ENCODE measurements at regions of chr1 and their contacts with region 1.

Region 1: GRCh38 chr1:89198491-89199072 is at the start of gene GBP4:
- DNase-seq: peak; percentile 19 to 83 (median 53)
- ATAC-seq: peak; percentile 60
- H3K4me3 ChIP-seq: peak within 1 kb of the TSS; percentile 75
- H3K4me3 Mint-ChIP-seq: peak within 1 kb of the TSS; percentile 95
- H3K27ac ChIP-seq: peak within 1 kb of the TSS; percentile 64 to 84
- H3K27ac Mint-ChIP-seq: peak within 1 kb of the TSS; percentile 89
- H3K4me1 ChIP-seq: peaks cover 27% of the 10 kb centered on the region
- H3K4me1 Mint-ChIP-seq: peaks cover 85% of the 10 kb centered on the region
- H3K27me3 ChIP-seq: no peaks in the 10 kb centered on the region
- H3K27me3 Mint-ChIP-seq: no peaks in the 10 kb centered on the region
- CTCF ChIP-seq: no peak
- total RNA-seq, gene GBP4: 11.3 to 11.7 TPM

Region 2: DNA sequence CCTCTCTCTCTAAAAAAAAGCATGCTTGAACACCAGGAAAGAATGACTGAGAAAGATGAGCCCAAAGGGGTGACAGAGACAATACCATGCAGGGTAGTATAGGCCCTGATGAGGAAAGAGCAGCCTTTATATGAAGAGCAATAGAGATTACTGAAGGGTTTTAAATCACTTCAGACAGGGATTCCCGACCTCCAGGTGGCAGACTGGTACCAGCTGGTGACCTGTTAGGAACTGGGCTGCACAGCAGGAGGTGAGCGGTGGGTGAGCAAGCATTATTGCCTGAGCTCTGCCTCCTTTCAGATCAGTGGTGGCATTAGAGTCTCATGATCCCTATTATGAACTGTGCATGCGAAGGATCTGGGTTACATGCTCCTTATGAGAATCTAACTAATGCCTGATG is 276.4 kb before region 1 on chr1:
- CTCF ChIA-PET with region 1: no interaction called
- POLR2A ChIA-PET with region 1: no interaction called
- intact Hi-C with region 1: no loop called
- DNase-seq: no peak
- ATAC-seq: no peak
- H3K4me3 ChIP-seq: no peak overlapping the region
- H3K4me3 Mint-ChIP-seq: no peak overlapping the region
- H3K27ac ChIP-seq: no peak overlapping the region
- H3K27ac Mint-ChIP-seq: no peak overlapping the region
- H3K4me1 ChIP-seq: no peaks in the 10 kb centered on the region
- H3K4me1 Mint-ChIP-seq: no peaks in the 10 kb centered on the region
- H3K27me3 ChIP-seq: no peaks in the 10 kb centered on the region
- H3K27me3 Mint-ChIP-seq: no peaks in the 10 kb centered on the region
- CTCF ChIP-seq: no peak

Region 3: GRCh38 chr1:89065079-89065868 is 133.3 kb before region 1 on chr1 and contains the start of gene GBP1:
- CTCF ChIA-PET with region 1: no interaction called
- POLR2A ChIA-PET with region 1: interaction called, 10 read pairs
- intact Hi-C with region 1: no loop called
- DNase-seq: peak in 4 of 14 experiments; percentile 14 to 81 (median 71)
- ATAC-seq: peak; percentile 87
- H3K4me3 ChIP-seq: peak within 1 kb of the TSS; percentile 61
- H3K4me3 Mint-ChIP-seq: peak within 1 kb of the TSS; percentile 97
- H3K27ac ChIP-seq: peak within 1 kb of the TSS; percentile 69 to 70
- H3K27ac Mint-ChIP-seq: peak within 1 kb of the TSS; percentile 93
- H3K4me1 ChIP-seq: peaks cover 13% of the 10 kb centered on the region
- H3K4me1 Mint-ChIP-seq: peaks cover 74% of the 10 kb centered on the region
- H3K27me3 ChIP-seq: no peaks in the 10 kb centered on the region
- H3K27me3 Mint-ChIP-seq: no peaks in the 10 kb centered on the region
- CTCF ChIP-seq: no peak
- total RNA-seq, gene GBP1: 15.5 to 16.5 TPM

Region 4: DNA sequence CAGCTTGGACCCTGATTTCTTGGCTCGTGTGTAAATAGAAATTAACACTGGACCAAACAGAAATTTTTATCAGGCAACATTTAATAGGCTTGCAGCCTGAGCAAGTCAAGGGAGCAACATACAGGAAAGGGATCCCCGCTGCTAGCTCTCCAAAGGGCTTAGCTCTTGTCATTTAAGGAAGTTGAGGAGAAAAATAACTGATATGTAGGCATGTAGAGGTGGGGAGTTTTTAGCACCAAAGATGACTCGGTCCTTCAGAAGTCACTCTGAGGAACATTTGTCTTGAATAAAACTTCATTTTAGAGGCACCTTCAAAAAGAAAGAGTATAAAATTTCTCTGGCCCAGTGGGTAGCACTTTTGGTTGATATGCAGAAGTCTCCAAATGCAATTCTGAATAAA is 99.7 kb before region 1 on chr1:
- CTCF ChIA-PET with region 1: no interaction called
- POLR2A ChIA-PET with region 1: no interaction called
- intact Hi-C with region 1: no loop called
- DNase-seq: no peak
- ATAC-seq: no peak
- H3K4me3 ChIP-seq: no peak overlapping the region
- H3K4me3 Mint-ChIP-seq: no peak overlapping the region
- H3K27ac ChIP-seq: no peak overlapping the region
- H3K27ac Mint-ChIP-seq: no peak overlapping the region
- H3K4me1 ChIP-seq: no peaks in the 10 kb centered on the region
- H3K4me1 Mint-ChIP-seq: no peaks in the 10 kb centered on the region
- H3K27me3 ChIP-seq: no peaks in the 10 kb centered on the region
- H3K27me3 Mint-ChIP-seq: no peaks in the 10 kb centered on the region
- CTCF ChIP-seq: no peak

Region 5: GRCh38 chr1:89261926-89262515 is 63.4 kb after region 1 on chr1:
- CTCF ChIA-PET with region 1: interaction called, 3 read pairs
- POLR2A ChIA-PET with region 1: interaction called, 41 read pairs
- intact Hi-C with region 1: loop called in 1 of 2 experiments (anchors 5 kb)
- DNase-seq: no peak
- ATAC-seq: no peak
- H3K4me3 ChIP-seq: no peak overlapping the region
- H3K4me3 Mint-ChIP-seq: no peak overlapping the region
- H3K27ac ChIP-seq: no peak overlapping the region
- H3K27ac Mint-ChIP-seq: peak overlapping the region; percentile 15
- H3K4me1 ChIP-seq: peaks cover 35% of the 10 kb centered on the region
- H3K4me1 Mint-ChIP-seq: peaks cover 66% of the 10 kb centered on the region
- H3K27me3 ChIP-seq: no peaks in the 10 kb centered on the region
- H3K27me3 Mint-ChIP-seq: no peaks in the 10 kb centered on the region
- CTCF ChIP-seq: no peak

Region 6: GRCh38 chr1:89274411-89274857 is 75.9 kb after region 1 on chr1:
- CTCF ChIA-PET with region 1: interaction called, 10 read pairs
- POLR2A ChIA-PET with region 1: interaction called, 62 read pairs
- intact Hi-C with region 1: loop called (anchors 5 kb)
- DNase-seq: peak in 3 of 14 experiments; percentile 78 to 81 (median 78)
- ATAC-seq: no peak
- H3K4me3 ChIP-seq: peak overlapping the region; percentile 24
- H3K4me3 Mint-ChIP-seq: peak overlapping the region; percentile 87
- H3K27ac ChIP-seq: peak overlapping the region; percentile 24 to 55
- H3K27ac Mint-ChIP-seq: peak overlapping the region; percentile 85
- H3K4me1 ChIP-seq: peaks cover 48% of the 10 kb centered on the region
- H3K4me1 Mint-ChIP-seq: peaks cover 83% of the 10 kb centered on the region
- H3K27me3 ChIP-seq: no peaks in the 10 kb centered on the region
- H3K27me3 Mint-ChIP-seq: no peaks in the 10 kb centered on the region
- CTCF ChIP-seq: no peak

Region 7: DNA sequence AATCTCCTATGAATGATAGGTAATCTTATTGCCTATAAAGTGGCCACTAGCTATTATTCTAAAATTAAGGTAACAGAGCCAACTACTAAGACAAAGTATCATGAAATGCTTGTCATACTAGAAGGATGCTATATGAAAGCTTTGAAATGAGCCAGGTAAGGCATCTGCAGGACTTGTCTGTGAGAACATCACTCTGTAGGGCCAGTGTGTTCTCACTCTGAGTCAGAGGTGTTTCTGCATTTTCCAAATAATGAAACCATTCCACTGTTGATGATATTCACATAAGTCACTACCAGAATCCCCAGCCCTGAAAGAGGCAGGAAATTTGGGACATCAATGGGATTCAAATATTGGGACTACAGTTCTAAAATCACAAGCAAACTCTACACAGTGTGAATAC is 99.9 kb after region 1 on chr1:
- CTCF ChIA-PET with region 1: no interaction called
- POLR2A ChIA-PET with region 1: interaction called, 13 read pairs
- intact Hi-C with region 1: loop called in 1 of 2 experiments (anchors 5 kb)
- DNase-seq: no peak
- ATAC-seq: no peak
- H3K4me3 ChIP-seq: no peak overlapping the region
- H3K4me3 Mint-ChIP-seq: no peak overlapping the region
- H3K27ac ChIP-seq: no peak overlapping the region
- H3K27ac Mint-ChIP-seq: no peak overlapping the region
- H3K4me1 ChIP-seq: peaks cover 19% of the 10 kb centered on the region
- H3K4me1 Mint-ChIP-seq: peaks cover 45% of the 10 kb centered on the region
- H3K27me3 ChIP-seq: no peaks in the 10 kb centered on the region
- H3K27me3 Mint-ChIP-seq: no peaks in the 10 kb centered on the region
- CTCF ChIP-seq: no peak